ENCODE measurements at regions of chr4 and their contacts with region 1.

Region 1: DNA sequence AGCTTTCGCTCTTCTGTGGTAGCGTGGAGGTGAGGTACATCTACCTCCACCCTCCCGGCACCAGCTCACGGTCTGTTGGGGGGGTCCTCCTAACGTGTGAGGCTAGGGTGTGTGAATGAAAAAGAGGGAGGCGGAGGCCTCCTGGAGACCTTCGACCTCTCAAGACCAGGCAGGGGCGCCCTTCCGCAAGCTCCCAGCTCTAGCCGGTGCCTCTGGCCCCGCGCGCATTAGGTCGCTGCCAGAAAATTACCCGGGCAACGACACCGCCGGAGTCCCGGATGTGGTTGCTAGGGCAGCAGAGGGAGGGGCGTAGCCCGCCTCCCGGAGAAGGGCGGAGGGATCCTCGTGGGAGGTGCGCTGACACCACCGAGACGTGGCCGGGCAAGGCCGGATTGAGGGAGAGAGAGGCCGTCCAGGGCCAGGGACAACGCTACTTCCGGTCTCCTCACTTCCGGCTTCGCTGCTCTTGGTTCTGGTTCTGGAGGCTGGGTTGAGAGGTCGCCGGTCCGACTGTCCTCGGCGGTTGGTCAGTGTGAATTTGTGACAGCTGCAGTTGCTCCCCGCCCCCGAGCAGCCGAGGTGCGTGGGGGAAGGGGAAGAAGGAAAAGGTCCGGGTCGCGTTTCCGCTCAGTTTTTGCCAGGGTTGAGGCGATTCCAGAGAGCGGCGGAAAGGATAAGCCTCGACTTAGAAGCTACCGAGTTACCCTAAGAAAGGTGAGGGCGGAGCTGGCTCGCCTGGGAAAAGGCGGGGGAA is at the starts of genes ARFIP1 and TIGD4:
- DNase-seq: peak; percentile 97
- ATAC-seq: peak; percentile 96 to 97
- H3K4me3 ChIP-seq: peak within 1 kb of the TSS; percentile 80 to 90 (median 90)
- H3K27ac ChIP-seq: peak within 1 kb of the TSS; percentile 84 to 95 (median 90)
- H3K4me1 ChIP-seq: peaks cover 28 to 38% of the 10 kb centered on the region in 2 donors
- H3K27me3 ChIP-seq: no peaks in the 10 kb centered on the region
- CTCF ChIP-seq: peak in 1 of 5 experiments; percentile 27
- POLR2A ChIP-seq: peak; percentile 46 to 49
- total RNA-seq, gene ARFIP1: 8.4 to 11.9 (median 9.7) TPM
- total RNA-seq, gene TIGD4: 0.09 to 0.23 TPM in 2 of 4 donors, not detected in the others

Region 2: GRCh38 chr4:151099229-151099975 is 1680.3 kb before region 1 on chr4 and contains the start of gene RPS3A:
- in situ Hi-C with region 1: loop called in 2 of 4 experiments (anchors 10 to 25 kb)
- intact Hi-C with region 1: loop called (anchors 5 kb)
- DNase-seq: peak; percentile 93 to 96
- ATAC-seq: peak; percentile 97 to 98
- H3K4me3 ChIP-seq: peak within 1 kb of the TSS; percentile 77 to 89 (median 81)
- H3K27ac ChIP-seq: peak within 1 kb of the TSS; percentile 89 to 91 (median 89)
- H3K4me1 ChIP-seq: peaks cover 16 to 18% of the 10 kb centered on the region in 2 donors
- H3K27me3 ChIP-seq: no peaks in the 10 kb centered on the region
- CTCF ChIP-seq: peak; percentile 55 to 87 (median 75)
- POLR2A ChIP-seq: peak; percentile 80
- total RNA-seq, gene RPS3A: 1,618 to 1,974 (median 1,771) TPM

Region 3: GRCh38 chr4:152535903-152536544 is 243.7 kb before region 1 on chr4 and contains the start of gene FBXW7:
- in situ Hi-C with region 1: no loop called
- intact Hi-C with region 1: loop called (anchors 1 kb)
- DNase-seq: peak; percentile 96 to 98
- ATAC-seq: peak; percentile 95 to 96
- H3K4me3 ChIP-seq: peak within 1 kb of the TSS; percentile 80 to 99 (median 96)
- H3K27ac ChIP-seq: peak within 1 kb of the TSS; percentile 84 to 95 (median 92)
- H3K4me1 ChIP-seq: peaks cover 40 to 53% of the 10 kb centered on the region in 2 donors
- H3K27me3 ChIP-seq: no peaks in the 10 kb centered on the region
- CTCF ChIP-seq: no peak
- POLR2A ChIP-seq: peak; percentile 80 to 87
- total RNA-seq, gene FBXW7: 23.5 to 40.8 (median 28.8) TPM

Region 4: GRCh38 chr4:152684007-152684406 is 95.7 kb before region 1 on chr4:
- in situ Hi-C with region 1: no loop called
- intact Hi-C with region 1: no loop called
- DNase-seq: no peak
- ATAC-seq: no peak
- H3K4me3 ChIP-seq: no peak overlapping the region
- H3K27ac ChIP-seq: no peak overlapping the region
- H3K4me1 ChIP-seq: peaks cover 17 to 38% of the 10 kb centered on the region in 2 donors
- H3K27me3 ChIP-seq: no peaks in the 10 kb centered on the region
- CTCF ChIP-seq: no peak
- POLR2A ChIP-seq: no peak

Region 5: DNA sequence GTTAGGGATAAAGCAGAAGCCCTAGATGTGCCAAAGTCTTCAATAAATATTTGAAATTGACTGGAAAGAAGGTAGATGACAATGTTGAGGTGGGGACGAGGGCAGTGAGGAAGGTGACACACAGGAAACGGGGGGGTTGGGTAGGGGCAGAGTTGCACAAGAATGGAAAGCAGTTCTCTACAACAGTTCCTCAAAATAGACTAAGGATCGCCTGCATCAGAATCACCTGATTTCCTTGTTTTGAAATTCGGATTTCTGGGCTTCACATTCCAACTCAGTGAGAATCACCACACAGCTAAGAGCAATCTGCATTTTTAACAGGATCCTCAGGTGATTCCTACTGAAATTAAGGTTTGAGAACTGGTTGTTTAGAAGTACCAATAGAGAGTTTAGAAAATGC is 70.7 kb after region 1 on chr4:
- in situ Hi-C with region 1: no loop called
- intact Hi-C with region 1: loop called (anchors 5 kb)
- DNase-seq: peak; percentile 51 to 72
- ATAC-seq: peak; percentile 94 to 99
- H3K4me3 ChIP-seq: peak overlapping the region in 2 of 4 donors; percentile 18 to 24
- H3K27ac ChIP-seq: peak overlapping the region in 3 of 4 donors; percentile 65 to 67 (median 67)
- H3K4me1 ChIP-seq: peaks cover 10 to 11% of the 10 kb centered on the region in 2 donors
- H3K27me3 ChIP-seq: no peaks in the 10 kb centered on the region
- CTCF ChIP-seq: no peak
- POLR2A ChIP-seq: no peak

Region 6: DNA sequence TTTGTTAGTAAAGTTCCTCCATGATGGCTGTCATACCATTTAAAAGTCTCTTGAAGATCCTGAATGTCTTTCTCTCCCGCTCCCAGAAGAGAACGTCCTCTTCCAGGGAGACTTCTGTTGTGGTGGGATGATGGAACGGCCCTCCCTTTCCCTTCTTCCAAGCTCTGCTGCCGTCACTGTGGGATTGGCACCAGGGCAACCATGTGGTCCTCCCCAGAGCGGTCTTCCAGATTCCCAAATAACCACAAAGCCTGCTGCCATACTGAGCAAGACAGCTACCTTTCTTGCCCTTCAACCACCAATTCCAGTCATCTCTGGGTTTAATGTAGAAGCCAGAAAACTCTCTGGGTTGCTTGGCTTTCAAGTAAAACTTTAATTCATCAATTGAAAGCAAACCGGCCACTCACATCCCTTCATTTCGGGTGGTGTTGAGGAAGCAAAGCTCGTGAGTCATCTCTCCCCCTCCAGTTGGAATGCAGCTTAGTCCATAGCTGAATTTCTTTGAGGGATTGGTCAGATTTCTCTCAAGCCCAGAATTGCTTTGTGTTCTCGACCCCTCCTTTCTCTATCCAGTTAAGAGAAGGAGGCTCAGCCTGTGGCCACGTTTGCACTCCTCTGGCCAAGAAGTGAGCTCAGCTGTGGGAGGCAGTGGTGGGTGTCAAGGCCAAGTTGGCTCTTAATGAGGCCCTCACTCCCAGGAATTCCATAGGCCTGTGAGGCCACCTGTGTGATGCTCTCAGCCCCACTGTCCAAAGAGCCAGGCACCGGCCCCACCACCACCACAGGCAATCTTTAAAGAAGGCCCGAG is 193.3 kb after region 1 on chr4:
- in situ Hi-C with region 1: no loop called
- intact Hi-C with region 1: no loop called
- DNase-seq: no peak
- ATAC-seq: no peak
- H3K4me3 ChIP-seq: no peak overlapping the region
- H3K27ac ChIP-seq: no peak overlapping the region
- H3K4me1 ChIP-seq: no peaks in the 10 kb centered on the region
- H3K27me3 ChIP-seq: no peaks in the 10 kb centered on the region
- CTCF ChIP-seq: no peak
- POLR2A ChIP-seq: no peak

Region 7: DNA sequence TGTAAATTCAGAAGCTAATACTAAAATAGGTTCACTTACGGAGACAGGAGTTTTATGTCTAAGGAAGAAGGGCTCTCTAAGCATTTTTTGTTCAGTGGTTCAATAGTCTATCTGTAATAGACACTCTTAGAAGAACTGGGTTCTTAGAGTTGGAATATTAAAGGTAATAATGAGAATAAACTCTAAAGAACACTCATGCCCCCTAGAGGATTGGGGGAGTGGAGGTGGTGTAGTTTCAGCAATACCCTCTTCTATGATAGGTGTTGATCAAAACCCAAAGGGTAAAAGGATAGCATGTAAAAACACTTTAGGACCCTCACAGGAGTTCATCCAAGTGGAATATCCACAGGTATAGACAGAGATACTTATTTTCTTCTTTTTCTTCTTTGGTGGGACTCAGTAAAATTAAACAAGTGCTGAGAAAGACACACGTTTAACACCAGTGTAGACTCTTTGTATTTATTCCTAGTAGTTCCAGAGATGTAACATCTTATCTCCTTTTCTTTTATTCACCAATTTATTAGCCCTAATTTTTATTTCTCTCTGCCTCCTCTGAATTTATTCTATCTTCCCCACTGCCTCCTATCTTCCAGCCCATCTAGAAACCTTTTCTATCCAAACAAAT is 539.1 kb after region 1 on chr4:
- in situ Hi-C with region 1: no loop called
- intact Hi-C with region 1: no loop called
- DNase-seq: no peak
- ATAC-seq: peak in 1 of 2 donors; percentile 44
- H3K4me3 ChIP-seq: no peak overlapping the region
- H3K27ac ChIP-seq: no peak overlapping the region
- H3K4me1 ChIP-seq: no peaks in the 10 kb centered on the region
- H3K27me3 ChIP-seq: no peaks in the 10 kb centered on the region
- CTCF ChIP-seq: peak; percentile 30 to 65 (median 47)
- POLR2A ChIP-seq: no peak